ENCODE measurements at regions of chr6 and their contacts with region 1.

Region 1: DNA sequence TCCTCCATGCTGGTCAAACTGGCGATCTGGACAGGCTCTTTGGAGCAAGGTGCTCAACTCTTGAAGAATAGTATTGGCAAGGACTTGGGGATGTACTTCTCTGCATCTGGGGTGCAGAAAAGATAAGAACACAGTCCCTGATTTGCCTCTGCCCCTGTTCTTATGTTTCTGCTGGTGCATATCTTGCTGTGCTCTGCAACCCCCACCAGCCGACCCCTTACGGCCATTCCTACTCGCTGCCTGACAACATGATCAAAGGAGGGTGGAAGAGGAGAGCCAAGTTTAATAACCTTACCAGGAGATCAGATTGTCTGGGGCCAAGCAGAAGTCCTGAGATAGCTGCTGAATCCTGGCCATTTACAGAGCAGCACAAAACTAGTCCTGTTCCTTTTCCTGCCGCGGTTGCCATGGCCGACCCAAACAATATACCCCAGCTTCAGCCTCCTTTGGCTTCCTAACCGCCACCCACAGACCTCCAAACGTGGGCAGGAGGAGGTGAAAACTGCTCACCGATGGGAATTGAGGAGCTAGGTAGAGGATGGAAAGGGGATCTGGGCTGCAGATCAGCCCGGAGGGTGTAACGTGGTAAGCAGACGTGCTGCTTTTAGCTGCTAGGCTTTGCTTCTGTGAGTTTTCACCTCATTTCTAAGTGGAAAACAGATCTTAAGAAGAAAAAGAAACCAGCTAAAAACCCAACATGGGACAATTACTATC is 60.9 kb downstream of the ATXN1 start:
- DNase-seq: peak; percentile 66
- ATAC-seq: peak; percentile 73
- H3K4me3 Mint-ChIP-seq: peak overlapping the region; percentile 70
- H3K27ac Mint-ChIP-seq: peak overlapping the region; percentile 78
- H3K4me1 Mint-ChIP-seq: peaks cover 72% of the 10 kb centered on the region
- H3K27me3 Mint-ChIP-seq: no peaks in the 10 kb centered on the region

Region 2: DNA sequence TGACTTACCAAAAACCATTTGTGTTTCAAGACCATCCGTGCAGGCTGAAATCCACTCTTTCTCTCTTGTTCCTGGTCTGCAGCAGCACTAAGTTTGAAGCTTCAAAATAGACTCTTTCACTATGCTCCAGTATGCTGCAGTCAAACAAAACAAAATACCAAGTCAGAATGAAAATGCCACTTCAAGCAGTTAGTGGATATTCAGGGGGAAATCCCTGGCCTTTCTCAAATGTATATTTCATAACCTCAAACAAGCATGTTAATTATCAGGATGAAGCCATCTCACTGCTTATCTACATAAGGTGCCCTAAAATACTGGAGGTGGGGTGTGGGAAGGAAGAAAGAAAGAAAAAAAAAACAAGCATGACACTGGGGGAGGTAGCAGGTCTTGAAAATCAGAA is 42.6 kb before region 1 on chr6:
- CTCF ChIA-PET with region 1: interaction called, 30 read pairs
- POLR2A ChIA-PET with region 1: interaction called, 3 read pairs
- DNase-seq: no peak
- ATAC-seq: peak; percentile 13
- H3K4me3 Mint-ChIP-seq: peak overlapping the region; percentile 16
- H3K27ac Mint-ChIP-seq: peak overlapping the region; percentile 76
- H3K4me1 Mint-ChIP-seq: peaks cover 62% of the 10 kb centered on the region
- H3K27me3 Mint-ChIP-seq: no peaks in the 10 kb centered on the region

Region 3: GRCh38 chr6:16684896-16685554 is 15.3 kb before region 1 on chr6:
- CTCF ChIA-PET with region 1: interaction called, 32 read pairs
- POLR2A ChIA-PET with region 1: no interaction called
- DNase-seq: peak; percentile 47
- ATAC-seq: peak; percentile 53
- H3K4me3 Mint-ChIP-seq: no peak overlapping the region
- H3K27ac Mint-ChIP-seq: peak overlapping the region; percentile 49
- H3K4me1 Mint-ChIP-seq: peaks cover 48% of the 10 kb centered on the region
- H3K27me3 Mint-ChIP-seq: no peaks in the 10 kb centered on the region

Region 4: DNA sequence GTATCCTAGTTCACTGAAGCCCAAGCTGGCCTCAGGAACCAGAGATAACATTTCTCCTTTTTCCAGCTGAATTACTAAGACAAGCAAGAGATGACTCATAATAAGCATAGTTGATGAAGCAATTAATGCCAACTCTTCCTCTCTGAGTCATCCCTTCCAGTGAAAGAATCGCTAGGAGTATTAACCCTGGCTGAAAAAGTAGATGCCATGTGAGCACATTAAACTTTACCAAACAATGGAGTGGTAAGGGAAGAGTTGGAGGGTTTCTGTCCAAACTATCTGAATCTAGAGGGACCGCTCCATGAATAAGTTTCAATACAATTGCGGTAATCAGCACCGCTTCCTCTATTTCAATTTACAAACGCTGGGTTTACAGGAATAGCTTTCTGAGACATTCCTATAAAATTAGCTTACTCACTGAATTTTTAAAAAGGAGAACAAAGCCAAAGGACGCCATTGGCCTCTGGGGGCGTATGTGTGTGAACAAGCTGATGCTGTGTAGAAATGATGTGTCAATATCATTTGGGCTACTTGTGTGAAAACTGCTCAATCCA is 12.6 kb after region 1 on chr6:
- CTCF ChIA-PET with region 1: interaction called, 23 read pairs
- POLR2A ChIA-PET with region 1: interaction called, 9 read pairs
- DNase-seq: no peak
- ATAC-seq: peak; percentile 37
- H3K4me3 Mint-ChIP-seq: peak overlapping the region; percentile 37
- H3K27ac Mint-ChIP-seq: peak overlapping the region; percentile 81
- H3K4me1 Mint-ChIP-seq: peaks cover 37% of the 10 kb centered on the region
- H3K27me3 Mint-ChIP-seq: no peaks in the 10 kb centered on the region

Region 5: DNA sequence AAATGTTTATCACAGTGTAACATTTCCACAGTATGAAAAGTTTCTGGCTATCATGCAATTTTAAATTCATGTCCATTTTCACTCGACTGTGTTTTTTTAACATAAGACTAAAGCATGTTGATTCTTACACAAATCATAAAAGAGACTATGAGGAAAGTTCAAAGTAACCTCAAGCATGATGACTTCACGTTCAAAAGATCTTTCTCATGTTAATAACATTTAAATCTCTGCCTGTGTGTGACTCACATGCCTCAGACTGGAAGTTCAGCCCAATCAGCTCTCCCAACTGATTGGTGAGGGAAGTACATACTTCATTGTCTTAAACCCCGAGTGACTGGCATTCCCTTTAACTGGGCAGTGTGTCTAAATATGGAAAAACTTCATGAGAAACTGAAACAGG is 23.5 kb after region 1 on chr6:
- CTCF ChIA-PET with region 1: interaction called, 15 read pairs
- POLR2A ChIA-PET with region 1: no interaction called
- DNase-seq: no peak
- ATAC-seq: no peak
- H3K4me3 Mint-ChIP-seq: no peak overlapping the region
- H3K27ac Mint-ChIP-seq: no peak overlapping the region
- H3K4me1 Mint-ChIP-seq: peaks cover 35% of the 10 kb centered on the region
- H3K27me3 Mint-ChIP-seq: no peaks in the 10 kb centered on the region

Region 6: DNA sequence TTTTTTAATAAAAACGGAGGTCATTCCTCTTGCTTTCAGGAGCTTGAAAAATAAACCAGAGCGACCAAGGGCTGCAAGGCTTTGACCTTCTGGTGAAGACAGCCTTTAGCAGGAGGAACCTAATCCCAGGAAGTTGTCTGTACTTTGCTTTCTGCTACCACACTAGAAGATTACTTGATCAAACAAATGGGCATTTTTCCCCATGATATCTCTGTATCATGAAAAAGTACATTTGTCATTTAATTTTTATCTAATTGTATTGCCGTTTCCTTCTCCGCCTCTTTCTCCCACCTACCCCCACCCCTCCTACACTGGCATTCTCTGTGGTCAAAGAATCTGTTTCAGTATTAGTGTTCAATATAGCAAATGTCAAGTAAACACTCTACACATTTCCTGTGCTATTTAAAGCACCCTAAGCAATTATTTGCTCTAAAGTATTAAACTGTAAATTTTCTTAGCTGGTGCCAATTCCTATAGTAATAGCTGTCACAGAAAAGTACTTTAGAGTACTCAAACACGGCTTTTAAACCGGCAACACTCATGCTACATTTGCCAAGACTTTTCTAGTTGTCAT is 31.2 kb after region 1 on chr6:
- CTCF ChIA-PET with region 1: interaction called, 15 read pairs
- POLR2A ChIA-PET with region 1: interaction called, 5 read pairs
- DNase-seq: peak; percentile 62
- ATAC-seq: peak; percentile 87
- H3K4me3 Mint-ChIP-seq: peak overlapping the region; percentile 63
- H3K27ac Mint-ChIP-seq: peak overlapping the region; percentile 82
- H3K4me1 Mint-ChIP-seq: peaks cover 65% of the 10 kb centered on the region
- H3K27me3 Mint-ChIP-seq: no peaks in the 10 kb centered on the region

Measured in activated CD8-positive, alpha-beta T cell treated with anti-CD3 and anti-CD28 coated beads, Interleukin-2, amount 10 ng/mL, durations not matched to agents 7 days and 5 days (primary cell).